ENCODE measurements at regions of chr7 and their contacts with region 1.

Region 1: GRCh38 chr7:96823274-96823673 is 113.6 kb upstream of the SEM1 start:
- DNase-seq: peak; percentile 16
- H3K4me3 Mint-ChIP-seq: no peak overlapping the region
- H3K27ac Mint-ChIP-seq: no peak overlapping the region
- H3K4me1 Mint-ChIP-seq: peaks cover 3% of the 10 kb centered on the region
- H3K27me3 Mint-ChIP-seq: peaks cover 48% of the 10 kb centered on the region

Region 2: GRCh38 chr7:96709381-96710228 is 113.7 kb before region 1 on chr7 and contains the start of gene SEM1:
- CTCF ChIA-PET with region 1: no interaction called
- intact Hi-C with region 1: loop called (anchors 1 kb)
- DNase-seq: peak; percentile 77
- H3K4me3 Mint-ChIP-seq: peak within 1 kb of the TSS; percentile 92
- H3K27ac Mint-ChIP-seq: peak within 1 kb of the TSS; percentile 93
- H3K4me1 Mint-ChIP-seq: peaks cover 27% of the 10 kb centered on the region
- H3K27me3 Mint-ChIP-seq: peaks cover 4% of the 10 kb centered on the region
- total RNA-seq, gene SEM1: 37.7 to 47.5 TPM

Measured in activated naive CD4-positive, alpha-beta T cell treated with anti-CD3 and anti-CD28 coated beads for 36 hours (primary cell).